ENCODE measurements at regions of chr15 and their contacts with region 1.

Region 1: GRCh38 chr15:75042730-75043508 is 19.5 kb downstream of the PPCDC start:
- DNase-seq: peak; percentile 96
- ATAC-seq: peak; percentile 63

Region 2: DNA sequence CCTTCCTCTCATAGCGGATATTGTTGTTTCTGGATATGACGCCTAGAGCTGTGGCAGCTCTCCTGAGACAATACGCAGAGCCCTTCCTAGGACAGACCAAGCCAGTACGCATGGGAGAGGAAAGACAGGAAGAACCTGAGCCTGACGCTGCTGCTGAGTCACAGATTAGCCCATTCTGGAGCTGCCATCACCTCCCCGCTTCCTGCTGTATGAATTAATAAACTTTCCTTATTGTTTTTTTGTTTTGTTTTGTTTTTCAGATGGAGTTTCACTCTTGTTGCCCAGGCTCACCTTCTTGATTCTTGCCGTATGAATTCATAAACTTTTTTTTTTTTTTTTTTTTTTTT is 47.4 kb after region 1 on chr15:
- intact Hi-C with region 1: loop called (anchors 1 kb)
- DNase-seq: no peak
- ATAC-seq: peak; percentile 79

Region 3: GRCh38 chr15:75138016-75138999 is 95.4 kb after region 1 on chr15:
- intact Hi-C with region 1: no loop called
- DNase-seq: no peak
- ATAC-seq: no peak

Measured in Right ventricle myocardium inferior (tissue), 1 donor.